Activated B cell treated with CpG ODN at 0.5 μM for 24 hours (primary cell): ENCODE measurements at regions of chrX and their contacts with region 1.

Region 1: DNA sequence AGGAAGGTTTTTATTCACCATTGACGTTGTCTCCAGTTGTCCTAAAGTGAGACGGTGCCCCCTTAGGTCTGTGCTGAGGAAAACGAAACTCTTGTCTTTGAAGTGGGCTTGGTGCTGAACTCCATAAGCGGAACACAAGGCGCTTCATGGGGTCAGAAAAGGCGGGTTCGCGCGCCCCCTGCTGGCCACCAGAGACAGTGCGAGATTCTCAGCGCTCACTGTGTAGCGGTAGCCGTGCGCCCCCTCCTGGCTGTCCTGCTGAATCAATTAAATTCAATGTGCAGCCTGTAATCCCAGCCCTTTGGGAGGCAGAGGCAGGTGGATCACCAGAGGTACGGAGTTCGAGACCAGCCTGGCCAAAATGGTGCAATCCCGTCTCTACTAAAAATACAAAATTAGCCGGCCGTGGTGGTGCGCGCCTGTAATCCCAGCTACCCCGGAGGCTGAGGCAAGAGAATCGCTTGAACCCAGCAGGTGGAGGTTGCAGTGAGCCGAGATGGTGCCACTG is 64.1 kb downstream of the RLIM start:
- DNase-seq: peak; percentile 71
- ATAC-seq: peak; percentile 95
- H3K4me3 Mint-ChIP-seq: peak overlapping the region; percentile 64
- H3K27ac Mint-ChIP-seq: peak overlapping the region; percentile 56
- H3K4me1 Mint-ChIP-seq: peaks cover 3% of the 10 kb centered on the region
- H3K27me3 Mint-ChIP-seq: no peaks in the 10 kb centered on the region
- CTCF ChIP-seq: peak; percentile 60

Region 2: GRCh38 chrX:73855546-73855945 is 694.8 kb before region 1 on chrX:
- CTCF ChIA-PET with region 1: no interaction called
- POLR2A ChIA-PET with region 1: no interaction called
- intact Hi-C with region 1: loop called (anchors 1 kb)
- DNase-seq: peak; percentile 15
- ATAC-seq: peak; percentile 31
- H3K4me3 Mint-ChIP-seq: no peak overlapping the region
- H3K27ac Mint-ChIP-seq: no peak overlapping the region
- H3K4me1 Mint-ChIP-seq: no peaks in the 10 kb centered on the region
- H3K27me3 Mint-ChIP-seq: no peaks in the 10 kb centered on the region
- CTCF ChIP-seq: no peak

Region 3: GRCh38 chrX:74382613-74383012 is 167.7 kb before region 1 on chrX:
- CTCF ChIA-PET with region 1: no interaction called
- POLR2A ChIA-PET with region 1: no interaction called
- intact Hi-C with region 1: loop called (anchors 1 kb)
- DNase-seq: peak; percentile 13
- ATAC-seq: no peak
- H3K4me3 Mint-ChIP-seq: no peak overlapping the region
- H3K27ac Mint-ChIP-seq: no peak overlapping the region
- H3K4me1 Mint-ChIP-seq: no peaks in the 10 kb centered on the region
- H3K27me3 Mint-ChIP-seq: peaks cover 3% of the 10 kb centered on the region
- CTCF ChIP-seq: no peak

Region 4: DNA sequence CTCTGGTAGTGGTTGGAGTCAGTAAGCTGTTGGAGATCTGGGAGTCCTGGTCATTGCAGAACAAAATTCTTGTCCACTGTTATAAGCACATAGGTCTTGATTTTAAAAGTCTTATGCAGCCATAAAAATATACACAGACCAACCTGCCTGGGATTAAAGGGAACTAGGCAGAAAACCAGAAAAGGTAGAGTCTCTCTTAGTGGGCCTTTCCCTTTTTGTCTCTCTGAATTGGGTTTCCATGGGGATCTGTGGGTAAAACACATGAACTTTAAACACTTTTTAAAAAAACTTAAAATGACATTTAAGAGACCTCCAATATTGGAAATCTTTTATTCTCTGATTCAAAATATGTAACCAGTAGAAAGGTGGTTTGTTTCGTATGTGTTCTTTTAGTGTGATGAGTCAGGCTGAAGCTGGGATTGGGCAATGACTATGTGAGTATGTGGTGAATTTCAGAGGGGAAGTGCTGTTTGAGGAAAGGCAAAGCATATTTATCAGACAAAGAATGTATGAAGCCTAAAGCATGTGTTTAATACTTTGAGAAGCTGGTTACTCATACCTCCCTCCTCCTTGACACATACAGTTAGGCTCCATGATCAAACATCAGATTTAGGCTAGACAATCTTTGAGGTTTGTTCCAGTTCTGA is 99.4 kb before region 1 on chrX:
- CTCF ChIA-PET with region 1: no interaction called
- POLR2A ChIA-PET with region 1: no interaction called
- intact Hi-C with region 1: no loop called
- DNase-seq: no peak
- ATAC-seq: no peak
- H3K4me3 Mint-ChIP-seq: no peak overlapping the region
- H3K27ac Mint-ChIP-seq: no peak overlapping the region
- H3K4me1 Mint-ChIP-seq: no peaks in the 10 kb centered on the region
- H3K27me3 Mint-ChIP-seq: no peaks in the 10 kb centered on the region
- CTCF ChIP-seq: no peak

Region 5: DNA sequence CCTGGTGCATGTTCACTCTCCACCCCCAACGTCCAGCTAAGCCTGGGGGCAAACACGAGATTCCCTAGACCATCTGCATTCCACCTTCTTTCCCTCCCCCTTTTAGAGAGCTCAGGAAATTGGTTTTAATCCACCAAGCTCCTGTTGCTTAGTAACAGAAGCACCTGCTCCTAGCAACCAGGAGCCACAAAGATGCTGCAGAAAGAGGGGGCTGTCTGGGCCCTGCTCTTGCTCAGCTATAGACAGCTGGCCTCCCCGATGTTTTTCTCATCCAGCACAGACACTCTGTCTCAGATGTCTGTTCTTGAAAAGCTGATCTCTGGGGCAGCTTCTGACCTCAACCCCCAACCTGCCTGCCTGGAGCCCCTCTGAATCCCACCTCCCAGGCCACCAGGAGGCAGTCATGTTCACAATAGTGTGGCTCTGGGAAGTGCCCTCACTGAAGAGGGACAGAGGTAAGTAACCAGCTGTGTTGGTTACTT is 57.6 kb before region 1 on chrX:
- CTCF ChIA-PET with region 1: interaction called, 23 read pairs
- POLR2A ChIA-PET with region 1: no interaction called
- intact Hi-C with region 1: loop called (anchors 1 kb)
- DNase-seq: no peak
- ATAC-seq: peak; percentile 74
- H3K4me3 Mint-ChIP-seq: no peak overlapping the region
- H3K27ac Mint-ChIP-seq: no peak overlapping the region
- H3K4me1 Mint-ChIP-seq: no peaks in the 10 kb centered on the region
- H3K27me3 Mint-ChIP-seq: no peaks in the 10 kb centered on the region
- CTCF ChIP-seq: no peak

Region 6: DNA sequence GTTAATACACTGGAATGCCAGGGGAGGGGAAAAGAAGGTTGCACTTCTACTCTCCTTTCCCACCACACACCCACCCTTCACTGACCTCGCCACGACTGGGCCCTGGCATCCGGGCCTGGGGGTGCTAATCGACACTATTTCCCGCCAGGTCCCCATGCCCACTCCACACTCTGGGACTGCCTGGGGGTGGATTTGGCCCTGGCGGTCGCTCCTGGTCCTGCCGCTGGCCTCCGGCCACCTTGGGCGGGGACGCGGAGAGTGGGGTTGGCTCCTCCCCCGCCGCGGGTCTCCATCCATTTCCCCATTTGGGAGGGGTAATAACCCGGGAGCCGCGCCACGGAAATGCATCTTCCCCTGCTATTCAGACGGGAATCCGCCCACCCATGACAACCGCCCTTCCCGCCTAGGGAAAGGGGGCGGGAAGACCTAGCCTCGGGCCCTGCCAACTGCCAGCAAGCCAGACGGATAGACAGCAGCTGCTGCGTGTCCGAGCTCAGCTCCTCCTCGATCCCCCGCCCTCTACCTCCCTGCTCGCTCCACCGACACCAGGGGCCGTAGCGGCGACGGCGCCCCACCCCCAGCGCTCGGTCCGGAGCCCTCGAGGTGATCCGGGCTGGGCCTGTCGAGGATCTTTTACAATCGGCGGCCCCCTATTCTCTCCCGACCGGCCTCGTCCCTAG is 14.1 kb before region 1 on chrX:
- CTCF ChIA-PET with region 1: no interaction called
- POLR2A ChIA-PET with region 1: no interaction called
- intact Hi-C with region 1: loop called (anchors 1 kb)
- DNase-seq: peak; percentile 36
- ATAC-seq: peak; percentile 66
- H3K4me3 Mint-ChIP-seq: peak overlapping the region; percentile 83
- H3K27ac Mint-ChIP-seq: peak overlapping the region; percentile 24
- H3K4me1 Mint-ChIP-seq: peaks cover 13% of the 10 kb centered on the region
- H3K27me3 Mint-ChIP-seq: no peaks in the 10 kb centered on the region
- CTCF ChIP-seq: no peak